Heart right ventricle (tissue), 16 donors: ENCODE measurements at regions of chr3 and their contacts with region 1.

Region 1: DNA sequence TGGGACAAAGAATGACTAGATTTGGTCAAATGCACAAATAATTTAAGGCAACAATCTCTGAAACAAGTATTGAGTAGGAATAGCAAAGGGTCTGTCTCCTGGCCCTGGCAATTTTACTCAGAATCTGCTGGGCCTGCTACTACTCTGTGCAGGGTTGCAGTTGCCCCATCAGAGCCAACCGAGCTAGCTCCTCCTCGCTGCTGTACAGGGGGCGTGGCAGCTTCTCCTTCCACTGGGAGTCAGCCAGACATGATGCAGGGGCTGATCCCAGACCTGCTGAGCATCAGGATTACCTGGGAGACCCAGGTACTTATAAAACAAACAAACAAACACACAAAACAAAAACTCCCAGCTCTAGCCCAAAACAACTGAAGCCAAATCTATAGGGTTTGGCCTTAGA is 30.5 kb upstream of the PXYLP1 start:
- DNase-seq: no peak
- ATAC-seq: no peak
- H3K4me3 ChIP-seq: no peak overlapping the region
- H3K27ac ChIP-seq: no peak overlapping the region
- H3K4me1 ChIP-seq: no peaks in the 10 kb centered on the region
- H3K27me3 ChIP-seq: peaks cover 0 to 8% (median 0%) of the 10 kb centered on the region in 7 donors
- CTCF ChIP-seq: no peak

Region 2: DNA sequence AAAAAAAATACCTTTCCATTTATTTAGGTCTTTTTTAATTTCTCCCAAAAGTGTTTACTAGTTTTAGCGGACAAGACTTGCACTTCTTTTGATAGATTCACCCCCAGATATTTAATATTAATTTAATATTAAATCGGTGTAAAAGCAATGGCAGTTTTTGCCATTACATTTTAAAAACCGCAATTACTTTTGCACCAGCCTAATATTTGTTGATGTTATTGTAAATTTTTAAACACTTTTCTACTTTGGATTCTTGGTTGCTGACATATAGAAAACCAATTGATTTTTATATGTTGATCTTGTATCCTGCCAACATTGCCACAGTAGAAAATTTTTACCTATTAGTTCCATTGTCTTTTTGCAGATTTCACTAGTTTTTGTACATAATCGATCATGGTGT is 33.4 kb before region 1 on chr3:
- intact Hi-C with region 1: loop called in 1 of 10 experiments (anchors 1 kb)
- DNase-seq: no peak
- ATAC-seq: no peak
- H3K4me3 ChIP-seq: no peak overlapping the region
- H3K27ac ChIP-seq: no peak overlapping the region
- H3K4me1 ChIP-seq: no peaks in the 10 kb centered on the region
- H3K27me3 ChIP-seq: peaks cover 0 to under 1% (median 0%) of the 10 kb centered on the region in 7 donors
- CTCF ChIP-seq: no peak

Region 3: DNA sequence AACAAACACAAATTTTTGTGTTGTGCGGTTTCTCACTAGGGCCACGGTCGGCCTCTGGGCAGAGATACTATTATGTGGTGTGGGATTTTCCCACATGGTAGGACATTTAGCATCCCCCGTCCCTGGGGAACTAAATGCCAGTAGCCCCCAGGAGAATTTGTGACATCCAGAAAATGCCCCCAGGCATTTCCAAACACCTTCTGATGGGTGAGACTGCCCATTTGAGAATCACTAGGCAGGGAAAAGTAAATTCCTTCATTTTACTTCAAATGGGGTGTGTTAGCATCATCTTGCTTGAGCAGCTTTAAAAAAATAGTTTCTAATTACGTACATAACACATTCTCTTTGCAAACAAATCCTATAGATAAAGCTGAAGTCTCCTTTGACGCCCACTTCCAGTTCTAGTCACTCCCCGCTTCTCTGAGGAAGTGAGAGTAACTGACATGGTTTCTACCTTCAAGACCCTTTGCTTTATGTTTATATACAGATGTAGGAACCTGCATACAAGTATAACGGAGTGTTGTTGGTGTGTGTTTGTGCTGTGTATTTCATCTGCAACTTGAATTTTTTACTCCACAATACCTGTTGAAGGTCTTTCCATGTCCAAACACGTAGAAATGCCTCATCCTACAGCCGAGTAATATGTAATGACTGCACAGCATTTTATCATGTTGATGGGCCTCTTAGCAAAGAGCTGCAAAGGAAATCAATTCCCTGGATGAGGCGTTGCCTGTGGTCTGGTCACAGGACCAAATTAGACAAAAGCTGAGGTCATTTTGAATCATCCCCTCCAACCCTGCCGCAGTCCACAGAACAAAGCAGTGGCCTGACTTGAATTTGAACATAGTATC is 135.8 kb after region 1 on chr3:
- intact Hi-C with region 1: no loop called
- DNase-seq: no peak
- ATAC-seq: peak in 1 of 8 donors; percentile 29
- H3K4me3 ChIP-seq: no peak overlapping the region
- H3K27ac ChIP-seq: peak overlapping the region in 1 of 10 donors; percentile 1
- H3K4me1 ChIP-seq: peaks cover 0 to 31% (median 9%) of the 10 kb centered on the region in 9 donors
- H3K27me3 ChIP-seq: no peaks in the 10 kb centered on the region
- CTCF ChIP-seq: no peak